B cell (primary cell): ENCODE measurements at regions of chr9 and their contacts with region 1.

Region 1: DNA sequence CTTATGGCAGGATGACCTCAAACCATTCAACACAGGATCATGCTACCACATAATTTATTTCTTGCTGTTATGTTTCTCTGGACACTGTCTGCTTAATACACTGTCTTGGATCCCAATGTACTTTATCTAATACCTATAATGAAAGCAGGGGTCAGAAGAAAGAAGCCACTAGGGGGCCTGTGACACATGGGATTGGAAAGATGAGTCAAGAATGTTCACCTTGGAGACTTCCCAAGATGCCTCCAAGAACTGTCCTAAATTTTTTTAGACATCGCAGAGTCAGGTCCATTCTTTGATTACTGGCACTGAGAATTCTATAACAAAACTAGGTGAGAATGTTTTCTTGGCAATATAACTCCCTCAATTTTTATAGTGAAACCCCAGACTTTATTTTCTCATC is 305.8 kb upstream of the SMARCA2 start:
- DNase-seq: peak; percentile 21
- ATAC-seq: no peak
- H3K4me3 ChIP-seq: no peak overlapping the region
- H3K4me3 Mint-ChIP-seq: no peak overlapping the region
- H3K27ac ChIP-seq: no peak overlapping the region
- H3K27ac Mint-ChIP-seq: no peak overlapping the region
- H3K4me1 ChIP-seq: no peaks in the 10 kb centered on the region
- H3K4me1 Mint-ChIP-seq: no peaks in the 10 kb centered on the region
- H3K27me3 ChIP-seq: no peaks in the 10 kb centered on the region
- H3K27me3 Mint-ChIP-seq: peaks cover 13% of the 10 kb centered on the region
- CTCF ChIP-seq: peak; percentile 60

Region 2: GRCh38 chr9:1536522-1537170 is 172.7 kb before region 1 on chr9:
- CTCF ChIA-PET with region 1: no interaction called
- POLR2A ChIA-PET with region 1: no interaction called
- intact Hi-C with region 1: no loop called
- DNase-seq: no peak
- ATAC-seq: no peak
- H3K4me3 ChIP-seq: no peak overlapping the region
- H3K4me3 Mint-ChIP-seq: no peak overlapping the region
- H3K27ac ChIP-seq: no peak overlapping the region
- H3K27ac Mint-ChIP-seq: no peak overlapping the region
- H3K4me1 ChIP-seq: no peaks in the 10 kb centered on the region
- H3K4me1 Mint-ChIP-seq: no peaks in the 10 kb centered on the region
- H3K27me3 ChIP-seq: no peaks in the 10 kb centered on the region
- H3K27me3 Mint-ChIP-seq: no peaks in the 10 kb centered on the region
- CTCF ChIP-seq: no peak

Region 3: GRCh38 chr9:1775230-1775629 is 65.9 kb after region 1 on chr9:
- CTCF ChIA-PET with region 1: no interaction called
- POLR2A ChIA-PET with region 1: no interaction called
- intact Hi-C with region 1: no loop called
- DNase-seq: no peak
- ATAC-seq: no peak
- H3K4me3 ChIP-seq: no peak overlapping the region
- H3K4me3 Mint-ChIP-seq: no peak overlapping the region
- H3K27ac ChIP-seq: no peak overlapping the region
- H3K27ac Mint-ChIP-seq: no peak overlapping the region
- H3K4me1 ChIP-seq: no peaks in the 10 kb centered on the region
- H3K4me1 Mint-ChIP-seq: no peaks in the 10 kb centered on the region
- H3K27me3 ChIP-seq: no peaks in the 10 kb centered on the region
- H3K27me3 Mint-ChIP-seq: no peaks in the 10 kb centered on the region
- CTCF ChIP-seq: no peak

Region 4: GRCh38 chr9:1939926-1940368 is 230.6 kb after region 1 on chr9:
- CTCF ChIA-PET with region 1: interaction called, 4 read pairs
- POLR2A ChIA-PET with region 1: no interaction called
- intact Hi-C with region 1: loop called (anchors 10 kb)
- DNase-seq: peak; percentile 61
- ATAC-seq: peak; percentile 70
- H3K4me3 ChIP-seq: no peak overlapping the region
- H3K4me3 Mint-ChIP-seq: peak overlapping the region; percentile 7
- H3K27ac ChIP-seq: no peak overlapping the region
- H3K27ac Mint-ChIP-seq: no peak overlapping the region
- H3K4me1 ChIP-seq: peaks cover 7 to 13% of the 10 kb centered on the region in 2 donors
- H3K4me1 Mint-ChIP-seq: peaks cover 22% of the 10 kb centered on the region
- H3K27me3 ChIP-seq: no peaks in the 10 kb centered on the region
- H3K27me3 Mint-ChIP-seq: peaks cover 7% of the 10 kb centered on the region
- CTCF ChIP-seq: peak; percentile 79